Activated B cell treated with CpG ODN at 0.5 μM for 24 hours (primary cell): ENCODE measurements at regions of chr13 and their contacts with region 1.

Region 1: DNA sequence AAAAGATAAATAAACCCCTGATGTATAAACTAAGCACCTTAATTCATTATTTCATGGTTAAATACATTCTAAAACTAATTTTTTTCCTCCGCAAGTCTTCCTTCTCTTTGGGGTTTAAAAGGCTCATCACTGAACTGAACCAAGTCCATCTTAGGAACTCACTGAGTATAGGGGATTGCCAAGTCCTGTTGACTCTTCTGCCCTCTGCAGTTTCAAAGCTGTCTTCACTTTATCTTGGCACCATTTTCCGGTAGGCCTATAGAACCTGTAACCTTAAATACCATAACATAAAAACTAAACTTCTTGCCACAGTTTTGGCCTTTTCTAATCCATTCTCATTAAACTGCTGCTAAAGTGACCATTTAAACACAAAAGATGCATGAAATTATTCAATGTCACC is 66.5 kb upstream of the USPL1 start:
- DNase-seq: no peak
- ATAC-seq: peak; percentile 85
- H3K4me3 Mint-ChIP-seq: no peak overlapping the region
- H3K27ac Mint-ChIP-seq: no peak overlapping the region
- H3K4me1 Mint-ChIP-seq: peaks cover 11% of the 10 kb centered on the region
- H3K27me3 Mint-ChIP-seq: no peaks in the 10 kb centered on the region
- CTCF ChIP-seq: no peak

Region 2: GRCh38 chr13:30107581-30107992 is 443.6 kb before region 1 on chr13:
- CTCF ChIA-PET with region 1: no interaction called
- POLR2A ChIA-PET with region 1: no interaction called
- intact Hi-C with region 1: no loop called
- DNase-seq: no peak
- ATAC-seq: no peak
- H3K4me3 Mint-ChIP-seq: no peak overlapping the region
- H3K27ac Mint-ChIP-seq: no peak overlapping the region
- H3K4me1 Mint-ChIP-seq: peaks cover 4% of the 10 kb centered on the region
- H3K27me3 Mint-ChIP-seq: no peaks in the 10 kb centered on the region
- CTCF ChIP-seq: no peak

Region 3: GRCh38 chr13:30142486-30143211 is 408.5 kb before region 1 on chr13:
- CTCF ChIA-PET with region 1: no interaction called
- POLR2A ChIA-PET with region 1: interaction called, 11 read pairs
- intact Hi-C with region 1: no loop called
- DNase-seq: no peak
- ATAC-seq: no peak
- H3K4me3 Mint-ChIP-seq: no peak overlapping the region
- H3K27ac Mint-ChIP-seq: no peak overlapping the region
- H3K4me1 Mint-ChIP-seq: peaks cover 37% of the 10 kb centered on the region
- H3K27me3 Mint-ChIP-seq: peaks cover 2% of the 10 kb centered on the region
- CTCF ChIP-seq: no peak

Region 4: DNA sequence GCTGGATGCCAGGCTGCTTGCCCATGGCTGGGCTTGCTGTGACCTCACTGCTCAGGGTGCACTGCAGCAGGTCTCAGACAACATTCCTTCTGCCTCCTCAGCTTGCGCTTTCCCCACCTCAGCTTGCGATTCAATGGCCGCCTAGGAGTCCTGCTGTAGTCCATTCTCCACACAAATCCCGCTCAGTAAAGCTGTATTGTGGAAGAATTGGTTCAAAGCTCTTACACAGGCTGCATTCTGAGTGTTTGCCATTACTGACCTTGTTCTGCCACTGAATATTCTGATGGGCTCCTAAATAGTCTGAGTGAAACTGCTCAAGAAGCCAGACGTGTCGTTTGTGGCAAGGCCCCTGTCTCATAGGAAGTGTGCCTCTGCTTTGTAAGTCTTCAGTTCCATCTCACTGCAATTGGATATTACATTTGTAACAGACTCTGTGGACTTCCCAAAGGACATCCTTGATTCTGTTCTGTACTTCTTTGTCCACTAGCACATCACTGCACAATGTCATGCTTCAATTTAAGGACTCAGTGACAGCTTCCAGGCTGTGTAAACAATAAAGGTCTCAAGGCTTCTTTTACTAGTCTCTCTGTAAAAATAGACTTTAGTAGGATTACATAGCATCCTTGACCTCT is 293.6 kb before region 1 on chr13:
- CTCF ChIA-PET with region 1: no interaction called
- POLR2A ChIA-PET with region 1: no interaction called
- intact Hi-C with region 1: loop called (anchors 1 kb)
- DNase-seq: no peak
- ATAC-seq: no peak
- H3K4me3 Mint-ChIP-seq: no peak overlapping the region
- H3K27ac Mint-ChIP-seq: no peak overlapping the region
- H3K4me1 Mint-ChIP-seq: peaks cover 12% of the 10 kb centered on the region
- H3K27me3 Mint-ChIP-seq: no peaks in the 10 kb centered on the region
- CTCF ChIP-seq: no peak

Region 5: GRCh38 chr13:30355384-30355699 is 195.8 kb before region 1 on chr13:
- CTCF ChIA-PET with region 1: interaction called, 6 read pairs
- POLR2A ChIA-PET with region 1: no interaction called
- intact Hi-C with region 1: loop called (anchors 1 kb)
- DNase-seq: peak; percentile 61
- ATAC-seq: peak; percentile 100
- H3K4me3 Mint-ChIP-seq: peak overlapping the region; percentile 45
- H3K27ac Mint-ChIP-seq: peak overlapping the region; percentile 77
- H3K4me1 Mint-ChIP-seq: peaks cover 32% of the 10 kb centered on the region
- H3K27me3 Mint-ChIP-seq: no peaks in the 10 kb centered on the region
- CTCF ChIP-seq: no peak

Region 6: GRCh38 chr13:30572859-30573275 is 21.7 kb after region 1 on chr13:
- CTCF ChIA-PET with region 1: no interaction called
- POLR2A ChIA-PET with region 1: no interaction called
- intact Hi-C with region 1: loop called (anchors 2 kb)
- DNase-seq: no peak
- ATAC-seq: peak; percentile 83
- H3K4me3 Mint-ChIP-seq: peak overlapping the region; percentile 64
- H3K27ac Mint-ChIP-seq: peak overlapping the region; percentile 71
- H3K4me1 Mint-ChIP-seq: peaks cover 23% of the 10 kb centered on the region
- H3K27me3 Mint-ChIP-seq: no peaks in the 10 kb centered on the region
- CTCF ChIP-seq: no peak